Activated B cell treated with CpG ODN at 0.5 μM for 24 hours (primary cell): ENCODE measurements at regions of chr10 and their contacts with region 1.

Region 1: DNA sequence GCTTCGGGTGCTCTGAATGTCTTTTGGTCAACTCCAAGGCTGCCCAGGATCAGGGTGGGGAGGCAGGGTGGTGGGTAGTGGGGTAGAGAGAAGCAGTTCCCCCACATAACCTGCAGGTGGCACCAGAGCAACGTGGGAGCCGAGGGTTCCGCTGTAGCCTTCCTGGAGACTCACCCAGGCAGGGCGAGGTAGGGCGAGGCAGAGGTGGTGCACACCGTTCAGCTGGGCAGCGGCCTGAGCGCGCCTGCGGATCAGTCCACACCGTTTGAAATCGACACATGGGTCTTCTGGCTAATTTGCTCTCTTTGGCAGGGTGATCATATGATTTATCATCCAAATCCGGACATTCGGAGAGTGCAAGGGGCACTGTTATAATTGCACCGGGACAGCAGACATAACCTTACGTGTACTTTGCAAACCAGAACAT is 41.4 kb upstream of the MAP3K8 start:
- DNase-seq: peak; percentile 70
- ATAC-seq: peak; percentile 100
- H3K4me3 Mint-ChIP-seq: peak overlapping the region; percentile 20
- H3K27ac Mint-ChIP-seq: no peak overlapping the region
- H3K4me1 Mint-ChIP-seq: peaks cover 4% of the 10 kb centered on the region
- H3K27me3 Mint-ChIP-seq: peaks cover 7% of the 10 kb centered on the region
- CTCF ChIP-seq: peak; percentile 34

Region 2: GRCh38 chr10:29998142-29998808 is 394.3 kb before region 1 on chr10:
- CTCF ChIA-PET with region 1: no interaction called
- POLR2A ChIA-PET with region 1: no interaction called
- intact Hi-C with region 1: loop called (anchors 5 kb)
- DNase-seq: peak; percentile 32
- ATAC-seq: peak; percentile 75
- H3K4me3 Mint-ChIP-seq: no peak overlapping the region
- H3K27ac Mint-ChIP-seq: no peak overlapping the region
- H3K4me1 Mint-ChIP-seq: no peaks in the 10 kb centered on the region
- H3K27me3 Mint-ChIP-seq: peaks cover 31% of the 10 kb centered on the region
- CTCF ChIP-seq: peak; percentile 43

Region 3: GRCh38 chr10:30330497-30331168 is 61.9 kb before region 1 on chr10:
- CTCF ChIA-PET with region 1: no interaction called
- POLR2A ChIA-PET with region 1: no interaction called
- intact Hi-C with region 1: no loop called
- DNase-seq: no peak
- ATAC-seq: no peak
- H3K4me3 Mint-ChIP-seq: no peak overlapping the region
- H3K27ac Mint-ChIP-seq: no peak overlapping the region
- H3K4me1 Mint-ChIP-seq: no peaks in the 10 kb centered on the region
- H3K27me3 Mint-ChIP-seq: no peaks in the 10 kb centered on the region
- CTCF ChIP-seq: no peak

Region 4: GRCh38 chr10:30413996-30414576 is 21.5 kb after region 1 on chr10:
- CTCF ChIA-PET with region 1: interaction called, 4 read pairs
- POLR2A ChIA-PET with region 1: no interaction called
- intact Hi-C with region 1: loop called (anchors 1 kb)
- DNase-seq: no peak
- ATAC-seq: peak; percentile 67
- H3K4me3 Mint-ChIP-seq: no peak overlapping the region
- H3K27ac Mint-ChIP-seq: peak overlapping the region; percentile 73
- H3K4me1 Mint-ChIP-seq: peaks cover 45% of the 10 kb centered on the region
- H3K27me3 Mint-ChIP-seq: no peaks in the 10 kb centered on the region
- CTCF ChIP-seq: peak; percentile 70

Region 5: DNA sequence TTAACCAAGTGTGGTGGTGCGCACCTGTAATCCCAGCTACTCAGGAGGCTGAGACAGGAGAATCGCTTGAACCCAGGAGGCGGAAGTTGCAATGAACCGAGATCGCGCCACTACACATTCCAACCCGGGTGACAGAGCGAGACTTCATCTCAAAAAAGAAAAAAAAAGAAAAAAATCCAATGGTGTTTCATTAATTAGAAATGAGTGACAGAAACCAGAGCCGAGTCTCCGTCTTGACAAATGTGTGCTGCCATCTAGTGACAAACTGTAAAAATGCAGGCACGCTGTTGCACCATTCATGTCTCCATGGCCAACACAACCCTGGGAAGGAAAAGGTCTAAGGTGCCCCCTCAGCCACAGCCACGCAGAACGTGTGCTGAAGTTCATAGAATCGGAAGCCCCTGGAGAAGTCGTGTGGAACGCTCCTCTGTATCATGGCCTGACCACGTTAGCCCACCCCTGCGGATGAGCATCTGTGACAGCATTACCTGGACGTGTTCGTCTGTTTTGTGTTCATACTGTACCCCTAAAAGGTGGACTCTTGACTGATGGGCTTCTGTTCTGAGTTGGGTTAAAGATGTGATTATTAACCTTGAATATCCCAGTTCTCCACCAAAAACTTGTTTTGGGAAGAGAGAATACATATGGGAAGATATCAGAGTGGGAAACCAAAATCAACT is 142.0 kb after region 1 on chr10:
- CTCF ChIA-PET with region 1: interaction called, 17 read pairs
- POLR2A ChIA-PET with region 1: no interaction called
- intact Hi-C with region 1: loop called (anchors 1 kb)
- DNase-seq: peak; percentile 40
- ATAC-seq: peak; percentile 45
- H3K4me3 Mint-ChIP-seq: no peak overlapping the region
- H3K27ac Mint-ChIP-seq: peak overlapping the region; percentile 69
- H3K4me1 Mint-ChIP-seq: peaks cover 42% of the 10 kb centered on the region
- H3K27me3 Mint-ChIP-seq: no peaks in the 10 kb centered on the region
- CTCF ChIP-seq: peak; percentile 57

Region 6: GRCh38 chr10:30583778-30584415 is 191.3 kb after region 1 on chr10:
- CTCF ChIA-PET with region 1: interaction called, 156 read pairs
- POLR2A ChIA-PET with region 1: interaction called, 3 read pairs
- intact Hi-C with region 1: loop called (anchors 1 kb)
- DNase-seq: no peak
- ATAC-seq: no peak
- H3K4me3 Mint-ChIP-seq: peak overlapping the region; percentile 67
- H3K27ac Mint-ChIP-seq: peak overlapping the region; percentile 31
- H3K4me1 Mint-ChIP-seq: peaks cover 49% of the 10 kb centered on the region
- H3K27me3 Mint-ChIP-seq: no peaks in the 10 kb centered on the region
- CTCF ChIP-seq: no peak

Region 7: GRCh38 chr10:30639946-30640786 is 247.6 kb after region 1 on chr10:
- CTCF ChIA-PET with region 1: interaction called, 8 read pairs
- POLR2A ChIA-PET with region 1: no interaction called
- intact Hi-C with region 1: loop called (anchors 1 kb)
- DNase-seq: no peak
- ATAC-seq: no peak
- H3K4me3 Mint-ChIP-seq: no peak overlapping the region
- H3K27ac Mint-ChIP-seq: no peak overlapping the region
- H3K4me1 Mint-ChIP-seq: no peaks in the 10 kb centered on the region
- H3K27me3 Mint-ChIP-seq: peaks cover 33% of the 10 kb centered on the region
- CTCF ChIP-seq: peak; percentile 69

Region 8: GRCh38 chr10:30671026-30671616 is 278.5 kb after region 1 on chr10:
- CTCF ChIA-PET with region 1: interaction called, 8 read pairs
- POLR2A ChIA-PET with region 1: no interaction called
- intact Hi-C with region 1: loop called (anchors 1 kb)
- DNase-seq: no peak
- ATAC-seq: peak; percentile 64
- H3K4me3 Mint-ChIP-seq: peak overlapping the region; percentile 61
- H3K27ac Mint-ChIP-seq: no peak overlapping the region
- H3K4me1 Mint-ChIP-seq: peaks cover 6% of the 10 kb centered on the region
- H3K27me3 Mint-ChIP-seq: peaks cover 16% of the 10 kb centered on the region
- CTCF ChIP-seq: peak; percentile 79